HepG2 (cell line): ENCODE measurements at regions of chr11 and their contacts with region 1.

Region 1: DNA sequence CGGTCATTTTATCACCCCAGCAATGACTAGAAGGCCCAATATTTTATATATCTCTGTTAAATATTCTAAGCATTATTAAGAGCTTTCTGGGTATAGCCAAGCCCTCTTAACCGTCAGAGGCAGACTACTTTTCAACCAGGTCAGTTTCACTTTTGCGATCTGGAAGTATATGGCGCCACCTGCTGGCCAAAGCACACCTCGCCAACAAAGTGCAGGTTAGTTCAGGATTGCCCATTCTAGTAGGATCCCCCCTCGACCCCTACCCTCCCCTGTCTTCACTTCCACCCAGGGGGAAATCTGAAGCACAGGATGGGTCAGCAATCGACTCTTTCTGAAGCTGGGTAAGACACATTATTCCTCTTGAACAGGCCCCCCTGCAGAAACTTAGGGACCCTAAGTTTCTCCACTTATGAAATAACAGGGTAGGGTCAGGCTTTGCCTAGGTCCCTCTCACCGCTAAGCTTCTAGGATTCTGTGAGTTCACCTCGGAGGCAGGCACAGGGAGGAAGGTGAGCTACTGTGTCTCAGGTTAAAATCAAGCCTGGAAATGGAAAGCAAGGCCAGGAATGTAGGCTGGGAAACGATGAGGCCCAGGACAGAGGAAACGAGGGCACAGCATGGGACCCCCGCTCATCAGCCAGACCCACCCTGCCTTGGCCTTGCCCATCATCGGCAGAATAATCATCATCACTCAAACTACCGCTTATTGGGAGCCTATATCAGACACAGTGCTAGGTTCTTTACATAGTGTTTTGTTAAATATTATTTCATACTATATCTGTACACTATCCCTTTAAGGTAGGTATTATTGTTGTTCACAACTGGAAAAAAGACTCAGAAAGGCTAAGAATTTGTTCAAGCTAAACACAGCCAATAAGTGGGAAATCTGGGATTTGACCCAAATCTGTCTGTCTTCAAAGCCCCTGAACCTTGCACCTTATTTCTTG is 35.6 kb downstream of the KCNJ1 start:
- DNase-seq: peak; percentile 62
- ATAC-seq: peak; percentile 94
- H3K4me3 ChIP-seq: no peak overlapping the region
- H3K27ac ChIP-seq: no peak overlapping the region
- H3K4me1 ChIP-seq: peaks cover 4% of the 10 kb centered on the region; the same call in 1 of the 2 replicates
- H3K27me3 ChIP-seq: peaks cover 2 to 8% of the 10 kb centered on the region in 2 experiments; a peak in 2 of 5 replicates
- CTCF ChIP-seq: peak; percentile 84
- EP300 ChIP-seq: no peak
- POLR2A ChIP-seq: no peak
- RAD21 ChIP-seq: peak; percentile 53

Region 2: DNA sequence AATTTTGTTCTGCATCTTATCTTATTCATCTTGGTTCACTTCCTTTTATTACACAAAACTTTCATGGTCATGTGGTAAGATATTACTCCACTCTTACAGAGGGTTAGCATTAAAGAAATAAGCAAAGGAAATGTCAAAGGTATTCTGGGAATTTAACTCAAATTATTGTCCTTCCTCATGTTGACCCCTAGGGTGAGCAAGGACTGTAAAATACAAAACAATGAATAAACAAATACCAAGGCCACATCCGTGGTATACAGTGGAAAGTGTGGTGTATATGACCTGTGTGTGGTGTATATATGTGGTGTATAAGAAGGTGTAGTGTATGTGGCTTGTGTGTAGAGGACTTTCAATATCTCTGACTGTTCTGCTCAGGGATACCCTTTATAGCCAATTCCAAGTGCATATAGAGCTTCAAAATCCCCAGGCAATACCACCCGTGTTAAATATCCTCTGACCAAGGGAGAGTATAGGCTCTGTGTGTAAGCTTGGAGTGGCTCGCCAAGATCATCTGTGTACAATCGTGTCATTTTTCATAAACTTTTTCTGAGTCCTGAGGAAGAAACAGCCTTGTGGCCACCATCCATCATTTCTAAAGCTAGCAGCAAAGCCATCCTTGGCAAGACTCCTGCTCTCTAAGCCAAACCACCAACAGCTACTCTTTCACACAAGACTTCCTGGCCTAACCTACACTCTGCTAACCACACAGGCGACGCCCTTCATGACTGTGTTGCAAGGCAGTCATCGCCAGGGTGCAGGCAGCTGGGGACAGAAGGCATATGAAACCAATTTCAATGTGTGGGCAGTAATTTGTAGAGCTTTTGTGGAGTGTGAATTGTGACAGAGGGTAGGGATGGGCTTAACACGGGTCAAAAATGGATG is 792.1 kb before region 1 on chr11:
- CTCF ChIA-PET with region 1: no interaction called
- POLR2A ChIA-PET with region 1: no interaction called
- in situ Hi-C with region 1: loop called (anchors 5 kb)
- intact Hi-C with region 1: no loop called
- DNase-seq: no peak
- ATAC-seq: no peak
- H3K4me3 ChIP-seq: no peak overlapping the region
- H3K27ac ChIP-seq: no peak overlapping the region
- H3K4me1 ChIP-seq: no peaks in the 10 kb centered on the region
- H3K27me3 ChIP-seq: no peaks in the 10 kb centered on the region; a peak in 2 of 5 replicates
- CTCF ChIP-seq: no peak
- EP300 ChIP-seq: no peak
- POLR2A ChIP-seq: no peak
- RAD21 ChIP-seq: no peak

Region 3: GRCh38 chr11:128172046-128172878 is 659.2 kb before region 1 on chr11:
- CTCF ChIA-PET with region 1: interaction called, 23 read pairs
- POLR2A ChIA-PET with region 1: no interaction called
- in situ Hi-C with region 1: loop called (anchors 5 kb)
- intact Hi-C with region 1: loop called (anchors 1 kb)
- DNase-seq: peak; percentile 46
- ATAC-seq: peak; percentile 80
- H3K4me3 ChIP-seq: no peak overlapping the region
- H3K27ac ChIP-seq: no peak overlapping the region
- H3K4me1 ChIP-seq: no peaks in the 10 kb centered on the region
- H3K27me3 ChIP-seq: no peaks in the 10 kb centered on the region
- CTCF ChIP-seq: peak; percentile 79
- EP300 ChIP-seq: no peak
- POLR2A ChIP-seq: no peak
- RAD21 ChIP-seq: peak; percentile 41; the same call in 1 of the 2 replicates

Region 4: GRCh38 chr11:128412847-128413791 is 418.3 kb before region 1 on chr11:
- CTCF ChIA-PET with region 1: no interaction called
- POLR2A ChIA-PET with region 1: no interaction called
- in situ Hi-C with region 1: no loop called
- intact Hi-C with region 1: no loop called
- DNase-seq: no peak
- ATAC-seq: no peak
- H3K4me3 ChIP-seq: no peak overlapping the region
- H3K27ac ChIP-seq: no peak overlapping the region
- H3K4me1 ChIP-seq: peaks cover 14% of the 10 kb centered on the region; the same call in 1 of the 2 replicates
- H3K27me3 ChIP-seq: no peaks in the 10 kb centered on the region; a peak in 1 of 5 replicates
- CTCF ChIP-seq: no peak
- EP300 ChIP-seq: no peak
- POLR2A ChIP-seq: no peak
- RAD21 ChIP-seq: no peak

Region 5: DNA sequence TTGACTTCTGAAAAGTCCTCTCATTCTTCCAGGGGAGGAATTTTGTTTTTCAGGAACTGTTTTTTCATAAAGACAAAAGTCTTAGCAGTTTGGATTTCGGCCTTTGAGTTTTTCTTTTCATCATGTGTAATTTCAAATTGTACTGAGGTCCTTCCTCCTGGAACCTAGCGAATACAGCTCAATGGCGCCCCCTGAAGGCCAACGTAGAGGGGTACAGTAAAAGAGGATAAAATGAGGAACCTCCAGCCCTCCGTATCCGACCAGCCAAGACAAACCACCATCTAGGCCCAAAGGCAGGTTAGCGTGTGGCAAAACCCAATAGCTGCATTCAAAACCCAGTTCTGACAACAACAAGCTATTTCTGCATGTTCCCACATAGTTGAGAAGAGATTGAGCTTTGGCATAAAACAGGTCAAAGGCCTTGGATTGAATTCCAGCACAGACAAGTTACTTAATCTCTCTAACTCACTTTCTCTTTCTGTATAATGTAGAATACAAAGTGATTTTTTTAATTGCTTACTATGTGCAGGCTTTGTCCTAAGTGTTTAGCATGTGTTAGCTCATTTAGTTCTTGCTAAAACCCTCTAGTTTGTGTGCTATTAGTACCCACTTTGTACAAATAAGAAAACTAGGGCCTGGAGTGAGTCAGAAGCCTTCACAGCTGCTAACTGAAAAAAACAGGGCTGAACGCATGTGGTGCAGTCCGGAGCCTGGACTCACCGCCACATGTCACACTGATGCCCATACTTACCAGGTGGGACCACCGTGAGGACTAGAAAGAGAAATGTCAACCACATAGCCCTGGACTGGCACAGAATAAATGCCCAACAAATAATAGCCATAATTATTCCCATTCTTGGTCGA is 200.8 kb before region 1 on chr11:
- CTCF ChIA-PET with region 1: no interaction called
- POLR2A ChIA-PET with region 1: no interaction called
- in situ Hi-C with region 1: no loop called
- intact Hi-C with region 1: loop called (anchors 2 kb)
- DNase-seq: peak; percentile 62
- ATAC-seq: peak; percentile 94
- H3K4me3 ChIP-seq: no peak overlapping the region
- H3K27ac ChIP-seq: no peak overlapping the region
- H3K4me1 ChIP-seq: no peaks in the 10 kb centered on the region
- H3K27me3 ChIP-seq: peaks cover 1 to 26% of the 10 kb centered on the region in 2 experiments; a peak in 2 of 5 replicates
- CTCF ChIP-seq: peak; percentile 81
- EP300 ChIP-seq: no peak
- POLR2A ChIP-seq: no peak
- RAD21 ChIP-seq: peak; percentile 63

Region 6: DNA sequence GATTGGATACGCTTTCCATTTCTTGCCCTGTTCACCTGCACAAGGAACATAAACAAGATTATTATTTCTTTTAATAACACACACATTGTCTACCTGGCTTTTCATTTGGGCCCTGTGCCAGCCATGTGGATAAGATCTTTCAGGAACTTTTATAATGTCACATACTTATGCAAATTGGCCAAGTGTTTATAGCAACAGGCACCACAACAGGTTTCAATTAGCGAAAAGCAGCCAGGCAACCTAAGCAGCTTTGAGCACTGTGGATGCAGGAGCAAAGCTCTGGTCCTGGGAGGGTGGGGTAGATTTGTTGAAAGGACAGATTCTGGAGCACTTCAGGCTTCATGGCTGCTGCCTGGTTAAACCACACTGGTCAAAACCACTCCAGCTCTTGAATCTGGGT is 761.7 kb after region 1 on chr11:
- CTCF ChIA-PET with region 1: no interaction called
- POLR2A ChIA-PET with region 1: no interaction called
- in situ Hi-C with region 1: no loop called
- intact Hi-C with region 1: no loop called
- DNase-seq: no peak
- ATAC-seq: no peak
- H3K4me3 ChIP-seq: no peak overlapping the region
- H3K27ac ChIP-seq: no peak overlapping the region
- H3K4me1 ChIP-seq: no peaks in the 10 kb centered on the region
- H3K27me3 ChIP-seq: peaks cover 1 to 34% of the 10 kb centered on the region in 2 experiments; a peak in 1 of 5 replicates
- CTCF ChIP-seq: no peak
- EP300 ChIP-seq: no peak
- POLR2A ChIP-seq: no peak
- RAD21 ChIP-seq: no peak